H1 (cell line): ENCODE measurements at regions of chr9 and their contacts with region 1.

Region 1: GRCh38 chr9:116589392-116590354 is 97.4 kb upstream of the TRIM32 start:
- DNase-seq: peak; percentile 50 to 80
- H3K4me3 ChIP-seq: no peak overlapping the region
- H3K27ac ChIP-seq: no peak overlapping the region
- H3K4me1 ChIP-seq: peaks cover 0 to 3% (median 1%) of the 10 kb centered on the region in 4 experiments; a peak in 1 of 7 replicates
- H3K27me3 ChIP-seq: no peaks in the 10 kb centered on the region
- CTCF ChIP-seq: peak in 2 of 3 experiments; percentile 97 to 98; a peak in 3 of 4 replicates
- EP300 ChIP-seq: 0 out of 3 replicates have a peak, but pooled peaks of 1 of the 2 experiments have one; percentile 39
- POLR2A ChIP-seq: no peak
- RAD21 ChIP-seq: peak; percentile 79 to 80

Region 2: DNA sequence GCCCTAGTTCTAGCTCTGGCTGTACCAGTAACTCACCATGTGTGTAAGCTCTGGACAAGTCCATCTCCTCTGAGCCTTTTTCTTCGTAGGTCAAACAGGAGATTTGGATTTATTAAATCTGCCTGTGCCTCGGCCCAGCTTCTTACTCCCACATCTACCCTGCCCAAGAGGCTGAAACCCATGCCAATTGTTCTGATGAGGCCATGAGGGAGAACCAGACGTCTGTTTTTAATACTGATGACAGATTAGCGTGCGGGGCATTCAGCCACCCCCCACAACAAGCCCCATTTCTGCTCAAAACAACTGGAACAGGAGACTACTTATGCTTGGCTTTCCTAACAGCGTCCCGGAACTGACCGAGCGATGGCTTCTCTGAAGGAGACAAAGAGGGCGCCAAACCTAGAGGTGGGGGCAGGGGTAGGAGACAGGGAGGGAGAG is 16.2 kb after region 1 on chr9:
- CTCF ChIA-PET with region 1: interaction called, 64 read pairs
- POLR2A ChIA-PET with region 1: interaction called, 4 read pairs
- DNase-seq: no peak
- H3K4me3 ChIP-seq: no peak overlapping the region
- H3K27ac ChIP-seq: no peak overlapping the region
- H3K4me1 ChIP-seq: peaks cover 0 to 6% (median 0%) of the 10 kb centered on the region in 4 experiments; a peak in 1 of 7 replicates
- H3K27me3 ChIP-seq: no peaks in the 10 kb centered on the region
- CTCF ChIP-seq: peak in 1 of 3 experiments; percentile 4; a peak in 1 of 4 replicates
- EP300 ChIP-seq: no peak
- POLR2A ChIP-seq: no peak
- RAD21 ChIP-seq: no peak

Region 3: GRCh38 chr9:116641292-116642059 is 51.8 kb after region 1 on chr9:
- CTCF ChIA-PET with region 1: interaction called, 66 read pairs
- POLR2A ChIA-PET with region 1: no interaction called
- DNase-seq: no peak
- H3K4me3 ChIP-seq: no peak overlapping the region
- H3K27ac ChIP-seq: no peak overlapping the region
- H3K4me1 ChIP-seq: no peaks in the 10 kb centered on the region
- H3K27me3 ChIP-seq: no peaks in the 10 kb centered on the region
- CTCF ChIP-seq: no peak
- EP300 ChIP-seq: no peak
- POLR2A ChIP-seq: no peak
- RAD21 ChIP-seq: no peak

Region 4: GRCh38 chr9:116661037-116661954 is 71.6 kb after region 1 on chr9:
- CTCF ChIA-PET with region 1: interaction called, 29 read pairs
- POLR2A ChIA-PET with region 1: no interaction called
- DNase-seq: no peak
- H3K4me3 ChIP-seq: no peak overlapping the region
- H3K27ac ChIP-seq: no peak overlapping the region
- H3K4me1 ChIP-seq: peaks cover 0 to 6% (median 0%) of the 10 kb centered on the region in 4 experiments; a peak in 1 of 7 replicates
- H3K27me3 ChIP-seq: no peaks in the 10 kb centered on the region
- CTCF ChIP-seq: peak in 2 of 3 experiments; percentile 81 to 82; a peak in 3 of 4 replicates
- EP300 ChIP-seq: no peak
- POLR2A ChIP-seq: no peak
- RAD21 ChIP-seq: peak; percentile 92 to 93

Region 5: GRCh38 chr9:117121316-117121715 is 531.6 kb after region 1 on chr9:
- CTCF ChIA-PET with region 1: no interaction called
- POLR2A ChIA-PET with region 1: no interaction called
- DNase-seq: no peak
- H3K4me3 ChIP-seq: no peak overlapping the region
- H3K27ac ChIP-seq: no peak overlapping the region
- H3K4me1 ChIP-seq: no peaks in the 10 kb centered on the region
- H3K27me3 ChIP-seq: no peaks in the 10 kb centered on the region
- CTCF ChIP-seq: no peak
- EP300 ChIP-seq: no peak
- POLR2A ChIP-seq: no peak
- RAD21 ChIP-seq: no peak